HEK293 (cell line): ENCODE measurements at regions of chr15 and their contacts with region 1.

Region 1: GRCh38 chr15:73633111-73633990 is at the start of gene NPTN:
- H3K4me3 ChIP-seq: peak within 1 kb of the TSS; percentile 97
- H3K27ac ChIP-seq: peak within 1 kb of the TSS; percentile 73
- H3K4me1 ChIP-seq: peaks cover 40% of the 10 kb centered on the region
- CTCF ChIP-seq: peak; percentile 98

Region 2: GRCh38 chr15:73364070-73364469 is 269.3 kb before region 1 on chr15:
- CTCF ChIA-PET with region 1: interaction called, 3 read pairs
- POLR2A ChIA-PET with region 1: interaction called, 11 read pairs
- H3K4me3 ChIP-seq: no peak overlapping the region
- H3K27ac ChIP-seq: no peak overlapping the region
- H3K4me1 ChIP-seq: peaks cover 2% of the 10 kb centered on the region; the same call in 1 of the 2 replicates
- CTCF ChIP-seq: no peak

Region 3: DNA sequence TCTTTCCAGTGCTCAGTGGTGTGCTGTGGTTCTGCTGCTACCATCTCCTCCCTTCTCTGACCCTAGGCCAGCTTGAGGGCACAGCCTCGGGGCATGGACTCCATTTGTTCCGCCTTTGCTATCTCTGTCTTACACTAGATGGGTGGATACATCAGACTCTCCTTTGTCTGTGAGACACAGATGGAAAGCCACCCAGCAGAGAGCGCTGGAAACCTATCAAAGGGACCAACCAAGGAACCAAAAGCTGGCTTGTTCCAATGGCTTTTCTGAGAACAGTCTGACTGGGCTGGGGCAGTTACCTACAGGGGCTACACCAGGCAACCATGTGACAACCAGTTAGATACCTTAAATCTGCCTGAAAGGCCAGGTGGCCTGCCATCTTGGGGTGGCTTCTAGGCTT is 64.0 kb before region 1 on chr15:
- CTCF ChIA-PET with region 1: interaction called, 168 read pairs
- POLR2A ChIA-PET with region 1: interaction called, 3 read pairs
- H3K4me3 ChIP-seq: no peak overlapping the region
- H3K27ac ChIP-seq: no peak overlapping the region
- H3K4me1 ChIP-seq: peaks cover 3% of the 10 kb centered on the region; the same call in 1 of the 2 replicates
- CTCF ChIP-seq: no peak

Region 4: GRCh38 chr15:73601451-73602445 is 31.6 kb before region 1 on chr15:
- CTCF ChIA-PET with region 1: interaction called, 36 read pairs
- POLR2A ChIA-PET with region 1: interaction called, 6 read pairs
- H3K4me3 ChIP-seq: no peak overlapping the region
- H3K27ac ChIP-seq: no peak overlapping the region
- H3K4me1 ChIP-seq: peaks cover 52% of the 10 kb centered on the region
- CTCF ChIP-seq: no peak

Region 5: GRCh38 chr15:73660455-73660854 is 27.1 kb after region 1 on chr15:
- CTCF ChIA-PET with region 1: interaction called, 12 read pairs
- POLR2A ChIA-PET with region 1: no interaction called
- H3K4me3 ChIP-seq: no peak overlapping the region
- H3K27ac ChIP-seq: no peak overlapping the region
- H3K4me1 ChIP-seq: peaks cover 15% of the 10 kb centered on the region; the same call in 1 of the 2 replicates
- CTCF ChIP-seq: no peak

Region 6: DNA sequence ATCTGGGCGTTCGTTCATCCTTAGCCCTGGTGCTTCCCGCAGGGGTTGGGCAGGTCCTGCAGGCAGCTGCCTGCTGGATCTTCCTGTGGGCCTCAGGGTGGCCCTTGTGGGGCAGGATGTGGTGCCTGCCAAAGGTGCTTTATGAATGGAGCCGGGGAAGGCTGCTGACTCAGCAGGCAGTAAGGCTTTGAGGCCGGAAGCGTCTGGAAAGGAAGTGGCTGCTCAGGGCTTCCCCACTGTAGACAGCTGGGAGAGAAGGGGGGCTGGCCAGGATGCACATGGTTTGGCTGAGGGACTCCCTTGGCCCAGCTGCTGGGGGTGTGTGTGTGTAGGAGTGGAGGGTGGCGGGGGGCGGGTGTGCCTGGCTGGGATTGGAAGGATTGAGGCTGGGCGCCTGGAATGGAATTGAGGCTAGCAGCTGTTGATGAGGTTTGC is 63.7 kb after region 1 on chr15:
- CTCF ChIA-PET with region 1: interaction called, 543 read pairs
- POLR2A ChIA-PET with region 1: interaction called, 4 read pairs
- H3K4me3 ChIP-seq: no peak overlapping the region
- H3K27ac ChIP-seq: peak overlapping the region; percentile 54
- H3K4me1 ChIP-seq: peaks cover 12% of the 10 kb centered on the region
- CTCF ChIP-seq: no peak